ENCODE measurements at regions of chr12 and their contacts with region 1.

Region 1: DNA sequence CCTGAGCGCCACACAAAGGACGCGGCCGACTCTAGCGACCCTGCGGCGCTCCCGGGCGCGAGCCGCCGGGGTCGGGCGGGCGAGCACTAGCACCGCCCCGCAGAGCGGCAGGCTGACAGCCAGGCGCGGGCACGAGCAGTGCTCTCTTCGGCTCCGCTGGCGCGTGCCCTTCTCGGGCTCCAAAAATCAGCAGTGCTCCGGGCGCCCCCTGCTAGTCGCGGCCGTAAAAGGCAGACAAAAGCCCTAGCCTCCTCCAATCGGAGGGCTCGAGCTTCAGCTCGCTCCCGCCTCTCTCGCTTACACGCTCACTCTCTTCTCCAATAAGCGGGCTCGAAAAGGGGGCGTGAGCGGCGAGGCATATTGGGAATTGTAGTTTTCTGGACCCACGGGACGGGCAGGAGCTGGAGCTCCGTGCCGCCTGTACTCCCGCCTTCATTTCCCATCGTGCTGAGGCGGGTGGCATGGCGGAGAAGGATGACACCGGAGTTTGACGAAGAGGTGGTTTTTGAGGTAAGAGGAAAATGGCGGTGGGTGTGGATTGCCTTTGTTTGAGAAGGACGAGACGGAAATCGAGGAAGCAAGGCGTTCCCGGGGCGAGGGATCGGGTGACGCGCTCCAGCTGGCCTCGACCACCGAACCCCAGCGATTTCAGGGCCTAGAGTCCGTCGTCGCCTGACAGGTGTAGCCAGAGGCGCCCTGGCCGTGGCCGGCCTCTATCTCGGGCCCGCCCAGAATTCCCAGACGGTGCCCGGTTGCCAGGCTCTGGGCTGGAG is at the starts of genes FGD6 and VEZT:
- DNase-seq: peak; percentile 98 to 100 (median 98)
- H3K4me3 ChIP-seq: peak within 1 kb of the TSS; percentile 87 to 97
- H3K4me3 Mint-ChIP-seq: peak within 1 kb of the TSS; percentile 94 to 100 (median 96)
- H3K27ac ChIP-seq: peak within 1 kb of the TSS; percentile 97
- H3K27ac Mint-ChIP-seq: peak within 1 kb of the TSS; percentile 92 to 100 (median 97)
- H3K4me1 ChIP-seq: peaks cover 34% of the 10 kb centered on the region
- H3K4me1 Mint-ChIP-seq: peaks cover 23 to 45% (median 34%) of the 10 kb centered on the region in 4 donors
- H3K27me3 ChIP-seq: no peaks in the 10 kb centered on the region
- H3K27me3 Mint-ChIP-seq: peaks cover 0 to 1% of the 10 kb centered on the region in 2 donors
- total RNA-seq, gene FGD6: 0.69 to 0.70 TPM
- total RNA-seq, gene VEZT: 43.9 to 49.4 TPM

Region 2: DNA sequence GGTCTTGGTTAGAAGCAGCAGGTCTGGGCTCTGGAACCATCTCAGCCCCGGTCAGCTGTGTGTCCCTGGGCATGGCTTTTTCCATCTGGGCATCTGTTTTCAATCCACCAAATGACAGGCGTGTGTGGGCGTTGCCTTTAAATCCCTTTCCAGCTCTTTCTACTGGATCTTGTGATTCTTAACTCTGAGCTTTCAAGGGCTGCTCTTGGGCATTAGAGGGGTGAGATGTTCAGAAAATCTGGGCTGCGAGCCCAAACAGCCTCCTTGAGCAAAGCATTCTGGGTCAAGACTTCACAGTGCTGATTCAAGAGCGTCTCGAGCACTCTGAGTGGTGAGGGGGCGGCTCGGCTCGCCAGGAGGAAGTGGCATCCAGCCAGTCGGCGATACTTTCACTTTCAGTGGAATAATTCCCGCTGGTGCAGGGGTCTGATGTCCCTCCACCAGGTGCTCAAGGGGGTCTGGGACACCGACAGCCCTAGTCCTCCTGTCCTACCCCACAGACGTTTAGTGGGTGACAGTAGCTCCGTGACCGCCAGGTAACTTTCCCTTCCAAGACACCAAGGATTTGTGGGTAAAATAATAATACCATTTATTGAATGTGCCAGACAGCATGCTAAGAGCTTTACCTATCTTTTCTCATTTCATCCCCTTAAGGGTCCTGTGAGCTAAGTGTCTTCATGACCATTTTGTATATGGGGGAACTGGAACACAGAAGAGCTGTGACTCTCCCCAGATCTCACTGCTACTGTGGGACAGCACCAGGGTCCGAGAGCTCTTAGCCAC is 955.1 kb before region 1 on chr12:
- CTCF ChIA-PET with region 1: no interaction called
- POLR2A ChIA-PET with region 1: no interaction called
- intact Hi-C with region 1: loop called (anchors 5 kb)
- DNase-seq: peak; percentile 71 to 82 (median 76)
- H3K4me3 ChIP-seq: peak overlapping the region; percentile 40 to 84
- H3K4me3 Mint-ChIP-seq: peak overlapping the region; percentile 95 to 98 (median 97)
- H3K27ac ChIP-seq: peak overlapping the region; percentile 74
- H3K27ac Mint-ChIP-seq: peak overlapping the region; percentile 97 to 99 (median 99)
- H3K4me1 ChIP-seq: peaks cover 28% of the 10 kb centered on the region
- H3K4me1 Mint-ChIP-seq: peaks cover 19 to 56% (median 33%) of the 10 kb centered on the region in 4 donors
- H3K27me3 ChIP-seq: no peaks in the 10 kb centered on the region
- H3K27me3 Mint-ChIP-seq: no peaks in the 10 kb centered on the region

Region 3: DNA sequence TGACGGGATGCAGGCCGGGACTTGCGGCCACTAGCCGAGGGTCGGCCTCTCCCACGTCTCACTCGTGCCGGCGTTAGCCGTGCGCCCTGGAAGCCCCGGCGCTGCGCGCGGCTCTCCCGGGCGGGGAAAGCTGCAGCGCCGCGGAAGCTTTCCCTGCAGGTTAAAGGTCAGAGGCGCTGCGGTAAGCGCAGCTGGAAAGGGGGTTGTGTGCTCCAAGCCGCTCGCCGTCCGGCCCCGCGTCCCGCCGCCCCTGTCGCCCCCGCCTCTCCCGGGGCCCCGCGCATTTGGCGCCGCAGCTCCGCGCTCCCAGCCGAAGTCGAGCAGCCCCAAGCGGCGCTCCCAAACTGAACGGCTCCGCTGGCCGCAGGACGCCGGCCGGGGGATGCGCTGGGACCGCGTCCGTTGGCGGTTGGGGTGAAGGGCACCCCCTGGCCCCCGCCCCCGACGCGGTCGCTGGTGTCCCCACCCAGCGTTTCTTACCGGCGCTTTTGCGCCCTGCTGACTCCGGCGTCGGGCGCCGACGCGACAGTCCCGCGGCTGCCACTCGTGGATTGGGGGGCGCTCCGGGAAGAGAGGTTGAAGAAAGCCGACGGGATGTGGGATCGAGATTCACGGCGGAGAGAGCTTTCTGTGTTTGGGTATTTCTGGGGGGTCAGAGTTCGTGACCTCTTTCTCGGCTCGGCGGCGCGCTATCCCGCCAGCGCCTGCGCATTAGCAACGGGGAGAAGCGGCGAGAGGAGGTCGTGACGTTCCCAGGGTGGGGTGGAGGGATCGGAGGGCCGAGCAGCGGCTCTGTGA is 144.5 kb before region 1 on chr12 and contains the start of gene NR2C1:
- CTCF ChIA-PET with region 1: interaction called, 6 read pairs
- POLR2A ChIA-PET with region 1: interaction called, 10 read pairs
- intact Hi-C with region 1: loop called (anchors 1 kb)
- DNase-seq: peak; percentile 92 to 95 (median 94)
- H3K4me3 ChIP-seq: peak within 1 kb of the TSS; percentile 88 to 89
- H3K4me3 Mint-ChIP-seq: peak within 1 kb of the TSS; percentile 93 to 99 (median 95)
- H3K27ac ChIP-seq: peak within 1 kb of the TSS; percentile 76
- H3K27ac Mint-ChIP-seq: peak within 1 kb of the TSS; percentile 84 to 98 (median 96)
- H3K4me1 ChIP-seq: peaks cover 22% of the 10 kb centered on the region
- H3K4me1 Mint-ChIP-seq: peaks cover 14 to 39% (median 20%) of the 10 kb centered on the region in 4 donors
- H3K27me3 ChIP-seq: no peaks in the 10 kb centered on the region
- H3K27me3 Mint-ChIP-seq: no peaks in the 10 kb centered on the region
- total RNA-seq, gene NR2C1: 45.4 to 55.4 TPM

Region 4: GRCh38 chr12:95083938-95084337 is 133.6 kb before region 1 on chr12:
- CTCF ChIA-PET with region 1: no interaction called
- POLR2A ChIA-PET with region 1: no interaction called
- intact Hi-C with region 1: no loop called
- DNase-seq: no peak
- H3K4me3 ChIP-seq: no peak overlapping the region
- H3K4me3 Mint-ChIP-seq: no peak overlapping the region
- H3K27ac ChIP-seq: no peak overlapping the region
- H3K27ac Mint-ChIP-seq: no peak overlapping the region
- H3K4me1 ChIP-seq: no peaks in the 10 kb centered on the region
- H3K4me1 Mint-ChIP-seq: peaks cover 0 to 2% (median under 1%) of the 10 kb centered on the region in 4 donors
- H3K27me3 ChIP-seq: no peaks in the 10 kb centered on the region
- H3K27me3 Mint-ChIP-seq: no peaks in the 10 kb centered on the region

Region 5: GRCh38 chr12:95473884-95474659 is 256.5 kb after region 1 on chr12 and contains the start of gene METAP2:
- CTCF ChIA-PET with region 1: interaction called, 15 read pairs
- POLR2A ChIA-PET with region 1: interaction called, 48 read pairs
- intact Hi-C with region 1: loop called (anchors 1 kb)
- DNase-seq: peak; percentile 87 to 92 (median 88)
- H3K4me3 ChIP-seq: peak within 1 kb of the TSS; percentile 83 to 99
- H3K4me3 Mint-ChIP-seq: peak within 1 kb of the TSS; percentile 99 to 100 (median 100)
- H3K27ac ChIP-seq: peak within 1 kb of the TSS; percentile 78
- H3K27ac Mint-ChIP-seq: peak within 1 kb of the TSS; percentile 90 to 100 (median 98)
- H3K4me1 ChIP-seq: peaks cover 50% of the 10 kb centered on the region
- H3K4me1 Mint-ChIP-seq: peaks cover 36 to 64% (median 54%) of the 10 kb centered on the region in 4 donors
- H3K27me3 ChIP-seq: no peaks in the 10 kb centered on the region
- H3K27me3 Mint-ChIP-seq: no peaks in the 10 kb centered on the region
- total RNA-seq, gene METAP2: 50.7 to 52.7 TPM

Region 6: DNA sequence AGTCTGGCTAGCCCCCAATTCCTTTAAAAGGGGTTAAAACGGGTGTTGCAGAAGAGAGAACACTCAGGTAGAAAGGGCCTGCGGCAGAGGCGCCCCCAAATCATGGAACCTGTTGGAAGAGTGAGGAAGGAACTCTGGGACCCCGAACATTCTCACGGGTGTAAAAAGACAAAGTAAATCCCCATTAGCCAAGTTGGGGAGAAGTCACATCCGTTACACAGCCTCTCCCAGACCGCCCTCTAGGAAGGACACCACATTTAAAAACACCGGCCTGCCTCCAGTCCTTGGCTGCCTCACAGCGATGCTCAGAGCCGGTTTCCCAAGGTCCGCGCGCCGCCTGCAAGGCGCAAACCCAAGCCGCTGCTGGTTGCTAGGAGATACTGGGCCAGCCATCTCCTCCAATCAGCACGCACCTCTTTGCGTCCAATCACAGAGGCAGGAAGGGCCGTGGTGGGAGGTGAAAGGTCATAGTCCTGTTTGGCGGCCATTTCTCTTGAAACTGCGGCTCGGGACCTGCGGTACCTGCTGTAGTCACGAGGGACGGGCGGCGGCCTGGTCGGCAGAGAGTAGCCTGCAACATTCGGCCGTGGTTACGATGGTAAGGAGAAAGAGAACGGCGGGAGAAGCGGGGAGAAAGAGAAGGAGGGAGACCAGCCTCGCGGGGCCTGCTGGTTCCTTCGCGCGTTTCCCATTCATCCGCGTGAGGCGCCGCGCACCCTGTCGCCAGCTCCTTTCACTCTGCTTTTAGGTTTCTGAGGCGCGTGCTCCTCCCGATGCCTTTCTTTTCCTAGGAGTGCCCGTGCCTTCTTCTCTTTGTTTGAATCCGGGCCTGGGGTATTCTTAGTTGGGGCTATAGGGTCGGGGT is 641.1 kb after region 1 on chr12 and contains the start of gene SNRPF:
- CTCF ChIA-PET with region 1: no interaction called
- POLR2A ChIA-PET with region 1: no interaction called
- intact Hi-C with region 1: loop called (anchors 1 kb)
- DNase-seq: peak; percentile 93 to 96 (median 94)
- H3K4me3 ChIP-seq: peak within 1 kb of the TSS; percentile 77 to 90
- H3K4me3 Mint-ChIP-seq: peak within 1 kb of the TSS in 1 of 8 donors; percentile 0
- H3K27ac ChIP-seq: peak within 1 kb of the TSS; percentile 75
- H3K27ac Mint-ChIP-seq: peak within 1 kb of the TSS in 1 of 7 donors; percentile 60
- H3K4me1 ChIP-seq: peaks cover 33% of the 10 kb centered on the region
- H3K4me1 Mint-ChIP-seq: peaks cover 13 to 26% (median 17%) of the 10 kb centered on the region in 4 donors
- H3K27me3 ChIP-seq: no peaks in the 10 kb centered on the region
- H3K27me3 Mint-ChIP-seq: no peaks in the 10 kb centered on the region
- total RNA-seq, gene SNRPF: 16.7 to 19.5 TPM

Region 7: GRCh38 chr12:96194971-96195844 is 977.6 kb after region 1 on chr12:
- CTCF ChIA-PET with region 1: no interaction called
- POLR2A ChIA-PET with region 1: no interaction called
- intact Hi-C with region 1: loop called (anchors 5 kb)
- DNase-seq: peak; percentile 72 to 94 (median 76)
- H3K4me3 ChIP-seq: peak overlapping the region; percentile 85 to 90
- H3K4me3 Mint-ChIP-seq: peak overlapping the region; percentile 93 to 100 (median 98)
- H3K27ac ChIP-seq: peak overlapping the region; percentile 95
- H3K27ac Mint-ChIP-seq: peak overlapping the region; percentile 96 to 100 (median 97)
- H3K4me1 ChIP-seq: peaks cover 52% of the 10 kb centered on the region
- H3K4me1 Mint-ChIP-seq: peaks cover 34 to 62% (median 42%) of the 10 kb centered on the region in 4 donors
- H3K27me3 ChIP-seq: no peaks in the 10 kb centered on the region
- H3K27me3 Mint-ChIP-seq: no peaks in the 10 kb centered on the region